OCI-LY7 (cell line): ENCODE measurements at regions of chr19 and their contacts with region 1.

Region 1: GRCh38 chr19:15555759-15556633 is 47.7 kb downstream of the CYP4F22 start:
- DNase-seq: peak; percentile 92
- H3K4me3 ChIP-seq: peak overlapping the region; percentile 21
- H3K27ac ChIP-seq: no peak overlapping the region
- H3K4me1 ChIP-seq: peaks cover 8% of the 10 kb centered on the region
- CTCF ChIP-seq: peak; percentile 79

Region 2: GRCh38 chr19:15161028-15161989 is 394.7 kb before region 1 on chr19:
- CTCF ChIA-PET with region 1: no interaction called
- POLR2A ChIA-PET with region 1: no interaction called
- intact Hi-C with region 1: loop called (anchors 5 kb)
- DNase-seq: peak; percentile 61
- H3K4me3 ChIP-seq: no peak overlapping the region
- H3K27ac ChIP-seq: no peak overlapping the region
- H3K4me1 ChIP-seq: peaks cover 6% of the 10 kb centered on the region
- CTCF ChIP-seq: peak; percentile 81

Region 3: GRCh38 chr19:15264061-15264932 is 291.7 kb before region 1 on chr19:
- CTCF ChIA-PET with region 1: no interaction called
- POLR2A ChIA-PET with region 1: no interaction called
- intact Hi-C with region 1: loop called (anchors 1 kb)
- DNase-seq: peak; percentile 76
- H3K4me3 ChIP-seq: no peak overlapping the region
- H3K27ac ChIP-seq: no peak overlapping the region
- H3K4me1 ChIP-seq: no peaks in the 10 kb centered on the region
- CTCF ChIP-seq: peak; percentile 93

Region 4: DNA sequence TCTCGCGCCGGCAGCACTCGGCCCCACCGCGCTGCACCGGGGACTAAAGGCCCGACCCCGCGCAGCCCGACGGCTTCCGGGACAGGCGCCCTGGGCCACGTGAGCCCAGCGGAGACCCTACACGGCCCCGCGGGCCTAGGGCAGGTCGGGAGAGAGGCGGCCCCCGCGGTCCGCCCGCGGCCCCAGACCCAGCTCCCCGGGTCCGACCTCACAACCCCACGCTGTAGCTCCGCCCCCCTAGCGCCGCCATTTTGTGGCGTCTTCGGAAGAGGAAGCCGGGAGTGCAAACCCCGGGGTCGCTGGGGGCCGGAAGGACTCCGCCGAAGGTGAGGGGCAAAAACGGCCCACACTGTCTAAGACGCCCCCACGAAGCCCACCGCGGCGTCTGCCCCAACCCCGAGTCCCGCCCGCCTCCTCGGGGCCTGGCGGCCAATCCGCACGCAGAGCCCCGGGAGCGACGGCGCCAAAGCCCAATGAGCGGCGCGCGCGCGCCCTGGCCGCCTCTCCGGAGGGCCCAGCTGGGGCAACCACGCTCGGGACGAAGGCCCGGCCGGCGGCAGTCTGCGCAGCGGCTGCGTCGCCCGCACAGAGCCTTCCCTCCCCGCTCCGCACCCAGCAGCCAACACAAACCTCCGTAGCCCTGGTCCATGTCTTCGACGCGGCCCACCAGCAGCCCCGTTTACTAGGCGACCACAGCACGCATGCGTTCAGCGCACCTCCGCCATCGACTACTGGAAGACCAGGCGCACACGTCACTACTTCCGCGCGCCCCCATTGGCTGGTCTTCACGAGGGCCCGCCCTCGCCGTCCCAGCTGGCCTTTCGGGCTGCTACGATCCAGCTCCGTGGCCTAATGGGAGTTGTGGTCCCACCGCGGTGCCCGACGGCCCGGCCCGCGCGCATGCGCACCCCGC is 176.7 kb before region 1 on chr19 and contains the start of gene AKAP8:
- CTCF ChIA-PET with region 1: no interaction called
- POLR2A ChIA-PET with region 1: no interaction called
- intact Hi-C with region 1: loop called (anchors 1 kb)
- DNase-seq: peak; percentile 99
- H3K4me3 ChIP-seq: peak within 1 kb of the TSS; percentile 83
- H3K27ac ChIP-seq: peak within 1 kb of the TSS; percentile 75
- H3K4me1 ChIP-seq: peaks cover 35% of the 10 kb centered on the region
- CTCF ChIP-seq: no peak
- total RNA-seq, gene AKAP8: 22.2 and 26.4 TPM in 2 replicates

Region 5: GRCh38 chr19:15432629-15433518 is 123.1 kb before region 1 on chr19:
- CTCF ChIA-PET with region 1: no interaction called
- POLR2A ChIA-PET with region 1: interaction called, 3 read pairs
- intact Hi-C with region 1: loop called (anchors 5 kb)
- DNase-seq: peak; percentile 92
- H3K4me3 ChIP-seq: peak overlapping the region; percentile 89
- H3K27ac ChIP-seq: peak overlapping the region; percentile 67
- H3K4me1 ChIP-seq: peaks cover 21% of the 10 kb centered on the region
- CTCF ChIP-seq: no peak